Activated T-helper 2 cell treated with anti-CD3 and anti-CD28 coated beads, Interferon-gamma antibody, Interleukin-2, Interleukin-4, amounts not matched to agents 10 μg/mL and 5 μg/mL and 100 μg/mL, durations not matched to agents 14 hours and 24 hours and 36 hours (primary cell): ENCODE measurements at regions of chr4 and their contacts with region 1.

Region 1: GRCh38 chr4:38759113-38759789 is 23.5 kb downstream of the TLR10 start:
- DNase-seq: peak; percentile 32
- H3K4me3 Mint-ChIP-seq: no peak overlapping the region
- H3K27ac Mint-ChIP-seq: no peak overlapping the region
- H3K4me1 Mint-ChIP-seq: peaks cover 16% of the 10 kb centered on the region
- H3K27me3 Mint-ChIP-seq: peaks cover 5% of the 10 kb centered on the region

Region 2: DNA sequence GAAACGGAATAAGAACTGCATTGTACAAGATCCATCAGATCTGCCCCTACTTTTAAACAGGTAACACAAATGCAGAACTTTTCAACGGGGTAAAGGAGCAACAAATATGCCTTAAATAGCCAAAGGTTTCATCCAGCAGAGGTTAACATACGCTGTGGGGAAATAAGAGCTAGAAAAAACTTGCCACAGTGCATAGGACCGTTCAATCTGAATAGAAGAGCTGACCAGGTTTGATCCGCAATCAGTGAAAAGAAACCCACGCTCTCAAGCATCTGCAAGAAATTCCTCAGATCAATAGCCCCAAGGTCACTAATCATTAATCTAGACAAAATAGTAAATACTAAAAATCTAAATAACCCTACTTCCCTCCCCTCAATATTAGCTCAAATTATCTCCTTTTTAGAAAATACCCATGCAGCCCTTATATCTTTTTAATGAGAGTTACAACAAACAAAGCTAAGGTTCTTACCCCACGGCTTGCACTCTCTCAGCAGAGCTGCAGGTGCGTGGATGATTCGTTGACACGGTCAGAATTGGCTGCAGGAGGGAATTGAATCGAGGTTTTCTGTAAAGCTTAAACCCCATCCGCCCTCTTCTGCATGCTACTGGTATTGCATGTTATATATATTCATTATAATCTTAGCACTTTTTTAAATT is 23.3 kb after region 1 on chr4 and contains the start of gene TLR10:
- intact Hi-C with region 1: loop called (anchors 1 kb)
- DNase-seq: no peak
- H3K4me3 Mint-ChIP-seq: no peak within 1 kb of the TSS
- H3K27ac Mint-ChIP-seq: no peak within 1 kb of the TSS
- H3K4me1 Mint-ChIP-seq: peaks cover 4% of the 10 kb centered on the region
- H3K27me3 Mint-ChIP-seq: peaks cover 14% of the 10 kb centered on the region
- total RNA-seq, gene TLR10: not detected in 2 replicates

Region 3: DNA sequence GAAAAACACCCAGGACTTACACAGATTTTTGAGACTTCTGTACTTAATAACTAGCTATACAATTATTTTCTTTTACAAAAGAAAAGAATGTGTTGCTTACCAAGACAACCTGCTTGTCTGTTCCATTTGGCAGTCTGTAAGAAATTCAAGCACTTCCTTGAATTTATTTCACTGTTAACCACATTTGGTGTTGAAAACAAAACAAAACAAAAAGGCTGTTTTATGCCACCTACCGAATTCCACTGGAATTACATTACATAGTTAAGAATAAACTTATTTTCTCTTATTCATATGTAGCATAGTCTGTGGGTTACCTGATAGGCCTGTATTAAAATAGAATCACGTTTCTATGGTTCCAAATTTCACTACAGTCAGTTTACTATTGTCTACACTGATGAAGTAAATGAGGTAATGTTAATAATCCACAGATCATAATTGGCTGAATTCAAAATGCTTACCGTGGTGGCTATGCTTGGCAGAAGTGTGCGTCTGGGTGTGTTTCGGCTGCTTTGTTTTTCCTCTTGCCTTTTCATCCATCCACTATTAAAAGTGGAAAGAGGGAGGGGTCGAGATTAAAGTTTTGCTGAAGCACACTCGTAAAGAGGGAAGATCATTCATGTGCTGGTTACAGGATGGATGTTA is 45.5 kb after region 1 on chr4 and contains the start of gene TLR1:
- intact Hi-C with region 1: loop called (anchors 2 kb)
- DNase-seq: no peak
- H3K4me3 Mint-ChIP-seq: peak within 1 kb of the TSS; percentile 80
- H3K27ac Mint-ChIP-seq: peak within 1 kb of the TSS; percentile 92
- H3K4me1 Mint-ChIP-seq: peaks cover 20% of the 10 kb centered on the region
- H3K27me3 Mint-ChIP-seq: peaks cover 2% of the 10 kb centered on the region
- total RNA-seq, gene TLR1: 0.34 and 0.67 TPM in 2 replicates

Region 4: GRCh38 chr4:38856524-38857337 is 97.5 kb after region 1 on chr4 and contains the start of gene TLR6:
- intact Hi-C with region 1: loop called (anchors 1 kb)
- DNase-seq: peak; percentile 47
- H3K4me3 Mint-ChIP-seq: peak within 1 kb of the TSS; percentile 73
- H3K27ac Mint-ChIP-seq: peak within 1 kb of the TSS; percentile 78
- H3K4me1 Mint-ChIP-seq: peaks cover 26% of the 10 kb centered on the region
- H3K27me3 Mint-ChIP-seq: peaks cover 5% of the 10 kb centered on the region
- total RNA-seq, gene TLR6: 0.37 and 0.48 TPM in 2 replicates

Region 5: DNA sequence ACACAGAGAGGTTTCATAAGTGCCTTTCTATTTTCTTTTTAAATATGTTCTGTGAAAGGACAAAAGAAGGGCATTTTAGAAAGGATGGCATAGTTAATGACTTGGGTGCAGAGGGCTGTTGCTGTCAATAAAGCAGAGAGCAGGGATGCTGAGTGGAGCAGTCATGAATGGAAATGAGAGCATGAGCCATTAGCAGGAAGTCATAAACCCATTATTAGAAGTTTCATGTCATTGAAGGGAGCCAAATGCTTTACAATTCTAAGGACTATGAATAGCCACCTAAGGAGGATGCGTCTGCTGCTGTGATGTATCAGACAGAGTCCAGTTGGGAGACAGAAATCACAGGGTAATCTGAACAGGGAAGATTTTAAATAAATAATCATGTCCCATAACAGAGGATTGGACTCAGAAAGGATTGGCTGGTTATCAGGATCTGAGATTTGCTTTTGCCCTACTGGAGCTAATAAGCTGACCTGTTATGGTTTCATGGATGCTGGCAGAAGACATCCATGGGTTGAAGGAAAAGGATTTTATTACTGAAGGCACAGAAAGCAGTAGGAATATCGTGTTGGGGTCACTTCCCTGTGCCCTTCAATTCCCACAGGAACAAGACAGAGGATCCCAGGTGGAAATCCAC is 375.6 kb after region 1 on chr4:
- intact Hi-C with region 1: loop called (anchors 2 kb)
- DNase-seq: no peak
- H3K4me3 Mint-ChIP-seq: no peak overlapping the region
- H3K27ac Mint-ChIP-seq: no peak overlapping the region
- H3K4me1 Mint-ChIP-seq: peaks cover 5% of the 10 kb centered on the region
- H3K27me3 Mint-ChIP-seq: no peaks in the 10 kb centered on the region